BJ (cell line): ENCODE measurements at regions of chr19 and their contacts with region 1.

Region 1: GRCh38 chr19:48588670-48589399 is 17.7 kb upstream of the SPACA4 start:
- DNase-seq: no peak
- H3K4me3 ChIP-seq: peak overlapping the region; percentile 47
- H3K27me3 ChIP-seq: no peaks in the 10 kb centered on the region
- CTCF ChIP-seq: peak; percentile 99

Region 2: GRCh38 chr19:48492925-48493717 is 95.7 kb before region 1 on chr19:
- CTCF ChIA-PET with region 1: interaction called, 161 read pairs
- POLR2A ChIA-PET with region 1: interaction called, 4 read pairs
- DNase-seq: peak; percentile 83
- H3K4me3 ChIP-seq: peak overlapping the region; percentile 75
- H3K27me3 ChIP-seq: peaks cover 4% of the 10 kb centered on the region; the same call in 1 of the 2 replicates
- CTCF ChIP-seq: no peak

Region 3: DNA sequence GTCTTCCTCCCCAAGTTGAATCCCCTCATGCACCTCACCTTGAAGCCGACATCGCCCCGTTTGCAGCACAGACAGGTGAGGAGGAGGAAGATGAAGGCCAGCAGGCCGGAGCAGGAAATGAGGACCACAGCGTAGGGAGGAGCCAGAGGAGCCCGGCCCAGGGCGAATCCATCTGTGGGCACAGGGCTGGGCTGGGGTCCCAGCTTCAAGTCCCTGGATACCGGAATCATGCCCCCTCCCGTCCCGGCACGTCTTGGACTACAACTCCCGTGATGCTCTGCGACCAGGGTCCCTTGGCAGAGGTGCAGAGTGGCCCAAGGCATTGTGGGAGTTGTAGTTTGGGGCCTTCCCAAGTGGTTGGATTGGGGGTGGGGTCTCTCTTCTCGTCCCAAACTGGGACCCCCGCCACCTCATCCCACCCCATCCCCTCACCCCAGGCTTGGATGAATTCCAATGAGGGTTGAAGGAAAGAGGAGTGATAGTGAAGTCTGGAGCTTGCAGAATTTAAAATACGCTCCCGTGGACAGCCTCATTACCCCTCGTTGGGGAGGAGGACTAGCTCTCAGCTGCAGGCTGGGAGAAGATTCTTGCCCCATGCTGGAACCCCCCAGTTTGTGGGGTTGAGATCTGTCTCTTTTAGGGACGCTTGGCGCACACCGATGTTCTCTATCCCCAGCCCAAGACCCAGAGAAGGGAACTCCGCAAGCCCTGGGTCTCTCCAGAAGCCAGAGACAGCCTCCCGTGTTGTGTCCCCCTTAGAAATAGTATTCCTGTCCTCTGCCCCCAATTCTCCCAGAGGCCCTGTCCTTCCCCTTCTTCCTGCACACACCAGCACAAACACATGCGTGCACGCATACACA is 78.2 kb before region 1 on chr19:
- CTCF ChIA-PET with region 1: interaction called, 226 read pairs
- POLR2A ChIA-PET with region 1: no interaction called
- DNase-seq: no peak
- H3K4me3 ChIP-seq: peak overlapping the region; percentile 7; the same call in 1 of the 2 replicates
- H3K27me3 ChIP-seq: peaks cover 21% of the 10 kb centered on the region
- CTCF ChIP-seq: no peak

Region 4: DNA sequence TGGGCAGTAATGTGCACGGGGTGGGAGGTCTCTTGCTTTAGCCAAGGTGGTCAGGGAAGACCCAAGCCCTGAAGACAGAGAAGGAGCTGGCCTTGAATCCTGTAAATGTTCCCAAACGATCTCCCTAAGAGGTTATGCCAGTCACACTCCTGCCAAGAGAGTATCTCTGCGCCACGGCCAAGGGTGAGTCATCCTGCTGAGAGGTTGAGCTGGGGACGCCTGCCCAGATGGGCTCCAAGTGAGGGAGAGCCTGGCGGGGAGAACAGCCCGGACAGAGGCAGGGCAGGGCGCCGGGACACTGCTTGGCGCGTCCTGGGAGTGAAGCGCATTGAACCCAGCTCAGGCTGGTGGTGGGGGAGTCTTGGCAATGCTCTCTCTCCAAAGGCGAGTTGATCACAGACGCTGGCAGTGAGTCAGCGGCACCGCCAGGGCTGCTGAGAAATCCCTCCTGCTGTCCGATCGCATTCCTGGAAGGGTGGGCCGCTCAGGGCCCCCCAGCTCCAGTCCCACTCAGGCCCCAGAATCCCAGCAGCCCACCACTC is 20.4 kb before region 1 on chr19:
- CTCF ChIA-PET with region 1: interaction called, 26 read pairs
- POLR2A ChIA-PET with region 1: no interaction called
- DNase-seq: peak; percentile 62
- H3K4me3 ChIP-seq: no peak overlapping the region
- H3K27me3 ChIP-seq: no peaks in the 10 kb centered on the region
- CTCF ChIP-seq: no peak

Region 5: GRCh38 chr19:48603449-48603848 is 14.6 kb after region 1 on chr19:
- CTCF ChIA-PET with region 1: interaction called, 32 read pairs
- POLR2A ChIA-PET with region 1: no interaction called
- DNase-seq: no peak
- H3K4me3 ChIP-seq: no peak overlapping the region
- H3K27me3 ChIP-seq: no peaks in the 10 kb centered on the region
- CTCF ChIP-seq: no peak

Region 6: GRCh38 chr19:48608798-48609263 is 20.0 kb after region 1 on chr19:
- CTCF ChIA-PET with region 1: interaction called, 32 read pairs
- POLR2A ChIA-PET with region 1: no interaction called
- DNase-seq: no peak
- H3K4me3 ChIP-seq: no peak overlapping the region
- H3K27me3 ChIP-seq: no peaks in the 10 kb centered on the region
- CTCF ChIP-seq: peak; percentile 72